Stomach (tissue), 19 donors: ENCODE measurements at regions of chr9 and their contacts with region 1.

Region 1: DNA sequence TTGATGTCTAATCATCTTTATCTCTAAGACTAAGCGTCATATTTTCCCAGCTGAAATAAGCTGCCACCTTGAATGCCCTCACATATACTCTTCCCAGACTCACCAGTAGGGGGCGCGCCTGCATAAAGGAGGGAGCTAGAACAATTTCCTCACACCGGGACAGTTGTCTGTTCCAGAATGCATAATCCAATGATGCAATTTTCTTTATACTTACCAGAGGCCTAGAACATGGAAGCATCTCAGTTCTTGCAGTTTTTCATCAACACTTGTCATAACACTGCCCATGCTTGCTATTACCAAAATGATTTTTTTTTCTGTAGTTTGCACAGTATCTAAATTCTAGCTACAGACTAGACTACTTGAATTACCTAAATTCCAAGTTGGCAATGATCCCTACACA is 203.9 kb downstream of the FRMD3 start:
- DNase-seq: peak; percentile 86 to 89
- H3K4me3 ChIP-seq: no peak overlapping the region
- H3K27ac ChIP-seq: no peak overlapping the region
- H3K4me1 ChIP-seq: no peaks in the 10 kb centered on the region
- H3K27me3 ChIP-seq: no peaks in the 10 kb centered on the region
- CTCF ChIP-seq: peak in 5 of 7 experiments; percentile 83 to 94 (median 88)
- EP300 ChIP-seq: no peak
- POLR2A ChIP-seq: no peak

Region 2: GRCh38 chr9:83544002-83544698 is 209.8 kb after region 1 on chr9:
- intact Hi-C with region 1: loop called (anchors 5 kb)
- DNase-seq: peak; percentile 29 to 55
- H3K4me3 ChIP-seq: no peak overlapping the region
- H3K27ac ChIP-seq: no peak overlapping the region
- H3K4me1 ChIP-seq: peaks cover 0 to 7% (median under 1%) of the 10 kb centered on the region in 4 donors
- H3K27me3 ChIP-seq: no peaks in the 10 kb centered on the region
- CTCF ChIP-seq: peak in 5 of 7 experiments; percentile 43 to 72 (median 62)
- EP300 ChIP-seq: no peak
- POLR2A ChIP-seq: no peak

Region 3: DNA sequence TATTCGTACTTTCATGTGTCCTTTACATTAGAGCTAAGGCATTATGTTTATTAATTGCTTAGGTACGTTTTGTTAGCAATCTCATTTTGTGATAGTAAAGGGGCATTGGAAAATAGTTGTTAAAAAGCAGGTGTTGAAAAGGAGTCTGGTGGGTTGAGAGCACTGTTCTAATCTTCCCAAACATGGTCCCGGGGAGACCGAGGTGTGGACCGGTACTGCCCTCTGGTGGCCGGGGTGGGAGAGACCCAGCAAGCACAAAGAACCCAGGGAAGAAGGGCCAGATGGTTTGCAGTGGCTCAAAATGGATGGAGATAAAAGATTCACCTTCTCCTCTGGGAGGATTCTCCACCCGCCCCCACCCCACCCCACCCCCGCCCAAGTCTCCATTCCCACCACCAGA is 314.8 kb after region 1 on chr9:
- intact Hi-C with region 1: loop called (anchors 10 kb)
- DNase-seq: peak; percentile 74 to 78
- H3K4me3 ChIP-seq: no peak overlapping the region
- H3K27ac ChIP-seq: no peak overlapping the region
- H3K4me1 ChIP-seq: no peaks in the 10 kb centered on the region
- H3K27me3 ChIP-seq: no peaks in the 10 kb centered on the region
- CTCF ChIP-seq: peak in 5 of 7 experiments; percentile 48 to 84 (median 66)
- EP300 ChIP-seq: no peak
- POLR2A ChIP-seq: no peak

Region 4: GRCh38 chr9:83920927-83921707 is 586.8 kb after region 1 on chr9 and contains the start of gene KIF27:
- intact Hi-C with region 1: no loop called
- DNase-seq: peak; percentile 99 to 100
- H3K4me3 ChIP-seq: peak within 1 kb of the TSS; percentile 81 to 93 (median 90)
- H3K27ac ChIP-seq: peak within 1 kb of the TSS; percentile 93 to 99 (median 98)
- H3K4me1 ChIP-seq: peaks cover 11 to 16% (median 14%) of the 10 kb centered on the region in 4 donors
- H3K27me3 ChIP-seq: no peaks in the 10 kb centered on the region
- CTCF ChIP-seq: peak in 4 of 7 experiments; percentile 3 to 60 (median 21)
- EP300 ChIP-seq: no peak
- POLR2A ChIP-seq: peak in 1 of 4 donors; percentile 45
- total RNA-seq, gene KIF27: 1.8 to 21.0 (median 6.7) TPM